Activated B cell treated with CpG ODN at 0.5 μM for 24 hours (primary cell): ENCODE measurements at regions of chr1 and their contacts with region 1.

Region 1: GRCh38 chr1:154272217-154272998 is at the start of gene HAX1:
- DNase-seq: peak; percentile 88
- ATAC-seq: peak; percentile 93
- H3K4me3 Mint-ChIP-seq: peak within 1 kb of the TSS; percentile 96
- H3K27ac Mint-ChIP-seq: peak within 1 kb of the TSS; percentile 97
- H3K4me1 Mint-ChIP-seq: peaks cover 39% of the 10 kb centered on the region
- H3K27me3 Mint-ChIP-seq: no peaks in the 10 kb centered on the region
- CTCF ChIP-seq: peak; percentile 46
- total RNA-seq, gene HAX1: 89.4 and 93.0 TPM in 2 replicates

Region 2: GRCh38 chr1:153572569-153573015 is 699.8 kb before region 1 on chr1:
- CTCF ChIA-PET with region 1: no interaction called
- POLR2A ChIA-PET with region 1: no interaction called
- intact Hi-C with region 1: loop called (anchors 2 kb)
- DNase-seq: peak; percentile 53
- ATAC-seq: peak; percentile 93
- H3K4me3 Mint-ChIP-seq: no peak overlapping the region
- H3K27ac Mint-ChIP-seq: peak overlapping the region; percentile 79
- H3K4me1 Mint-ChIP-seq: peaks cover 27% of the 10 kb centered on the region
- H3K27me3 Mint-ChIP-seq: peaks cover 8% of the 10 kb centered on the region
- CTCF ChIP-seq: no peak

Region 3: GRCh38 chr1:153796791-153797659 is 475.4 kb before region 1 on chr1:
- CTCF ChIA-PET with region 1: interaction called, 3 read pairs
- POLR2A ChIA-PET with region 1: no interaction called
- intact Hi-C with region 1: loop called (anchors 1 kb)
- DNase-seq: peak; percentile 59
- ATAC-seq: peak; percentile 97
- H3K4me3 Mint-ChIP-seq: no peak overlapping the region
- H3K27ac Mint-ChIP-seq: peak overlapping the region; percentile 1
- H3K4me1 Mint-ChIP-seq: peaks cover 16% of the 10 kb centered on the region
- H3K27me3 Mint-ChIP-seq: no peaks in the 10 kb centered on the region
- CTCF ChIP-seq: peak; percentile 89

Region 4: DNA sequence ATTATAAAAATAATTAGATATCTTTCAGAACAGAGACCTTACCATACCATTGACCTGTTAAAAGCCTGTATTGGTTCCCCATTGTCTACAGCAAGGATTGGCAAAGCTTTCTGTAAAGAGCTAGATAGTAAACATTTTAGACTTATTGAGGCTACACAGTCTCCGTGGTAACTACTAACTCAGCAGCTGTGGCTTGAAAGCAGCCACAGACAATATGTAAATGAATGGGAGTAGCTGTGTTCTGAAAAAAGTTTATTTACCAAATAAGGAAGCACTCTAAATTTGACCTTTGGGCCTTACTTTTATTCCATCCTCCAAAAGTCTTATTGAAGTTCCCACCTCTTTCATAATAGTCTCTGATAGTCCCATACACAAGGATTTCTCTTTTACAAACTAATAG is 157.2 kb before region 1 on chr1:
- CTCF ChIA-PET with region 1: no interaction called
- POLR2A ChIA-PET with region 1: no interaction called
- intact Hi-C with region 1: no loop called
- DNase-seq: no peak
- ATAC-seq: no peak
- H3K4me3 Mint-ChIP-seq: no peak overlapping the region
- H3K27ac Mint-ChIP-seq: no peak overlapping the region
- H3K4me1 Mint-ChIP-seq: peaks cover 4% of the 10 kb centered on the region
- H3K27me3 Mint-ChIP-seq: no peaks in the 10 kb centered on the region
- CTCF ChIP-seq: no peak

Region 5: DNA sequence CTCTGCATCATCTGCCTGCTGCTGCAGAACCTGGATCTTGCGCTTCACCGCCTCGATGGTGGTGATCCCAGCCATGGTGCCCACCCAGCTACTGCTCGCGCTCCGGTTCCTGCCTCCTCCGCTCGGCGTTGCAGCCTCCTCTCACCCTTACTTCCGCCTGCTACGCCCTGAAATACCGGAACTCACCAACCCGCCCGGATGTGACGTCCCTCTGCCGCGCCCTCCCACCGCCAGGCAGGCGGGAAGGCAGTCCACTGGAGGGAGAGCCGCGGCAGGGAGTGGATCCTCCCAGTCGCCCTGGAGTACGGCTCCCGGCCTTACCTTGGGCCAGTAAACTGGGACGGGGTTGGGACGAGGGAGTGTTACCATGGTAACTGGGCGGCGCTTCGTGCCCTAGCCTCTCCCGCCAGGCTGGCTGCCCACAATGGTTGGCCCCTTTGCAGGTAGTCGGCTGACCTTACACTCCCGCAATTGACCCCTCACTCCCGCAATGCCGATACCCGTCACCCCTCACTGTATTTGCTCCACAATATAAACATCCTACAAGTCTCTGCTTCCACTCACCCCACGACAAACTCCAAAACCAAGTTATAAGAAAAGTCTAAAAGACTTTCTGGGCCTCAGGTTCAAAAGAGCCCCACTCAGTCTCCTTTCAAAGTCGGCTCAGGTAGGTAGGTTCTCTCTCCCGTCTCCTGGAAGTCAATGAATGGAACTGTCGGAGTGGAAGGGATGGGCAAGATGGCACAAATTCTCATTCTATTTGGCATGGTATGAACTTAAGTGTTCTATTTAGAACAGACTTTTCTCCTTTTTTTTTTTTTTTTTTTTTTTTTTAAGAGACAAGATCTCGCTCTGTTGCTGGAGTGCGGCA is 89.1 kb before region 1 on chr1:
- CTCF ChIA-PET with region 1: interaction called, 7 read pairs
- POLR2A ChIA-PET with region 1: interaction called, 7 read pairs
- intact Hi-C with region 1: loop called (anchors 1 kb)
- DNase-seq: peak; percentile 93
- ATAC-seq: peak; percentile 76
- H3K4me3 Mint-ChIP-seq: peak overlapping the region; percentile 100
- H3K27ac Mint-ChIP-seq: peak overlapping the region; percentile 100
- H3K4me1 Mint-ChIP-seq: peaks cover 48% of the 10 kb centered on the region
- H3K27me3 Mint-ChIP-seq: peaks cover 2% of the 10 kb centered on the region
- CTCF ChIP-seq: no peak

Region 6: DNA sequence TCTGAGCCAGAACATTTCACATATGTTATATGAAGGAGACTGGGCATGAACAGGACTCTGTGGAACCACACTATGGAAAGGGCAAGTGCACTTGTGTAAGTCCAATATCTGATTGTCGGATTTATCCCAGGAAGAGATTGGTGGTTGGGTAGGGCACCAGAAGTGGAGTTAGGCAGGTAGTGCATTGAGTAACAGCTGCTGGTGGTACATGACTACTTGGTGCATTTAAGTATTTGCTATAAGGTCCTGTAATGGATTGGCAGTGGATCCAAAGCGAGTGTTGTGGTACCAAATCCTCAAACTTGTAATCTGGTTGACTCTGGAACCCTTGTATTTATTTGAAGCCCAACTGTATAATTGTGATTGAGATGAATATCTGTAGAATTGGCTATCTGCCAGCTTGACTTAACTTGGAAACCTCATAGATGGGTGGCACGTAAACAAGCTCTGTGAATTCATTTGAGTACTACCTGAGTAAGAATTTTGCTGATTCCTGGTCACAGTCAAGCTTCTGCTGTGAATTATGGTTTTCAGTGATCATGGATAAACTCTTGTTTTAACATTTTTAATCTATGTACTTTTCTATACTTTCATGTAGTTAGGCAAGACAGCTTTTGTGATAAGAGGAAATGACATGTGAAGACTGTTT is 30.6 kb before region 1 on chr1:
- CTCF ChIA-PET with region 1: no interaction called
- POLR2A ChIA-PET with region 1: no interaction called
- intact Hi-C with region 1: no loop called
- DNase-seq: no peak
- ATAC-seq: no peak
- H3K4me3 Mint-ChIP-seq: no peak overlapping the region
- H3K27ac Mint-ChIP-seq: no peak overlapping the region
- H3K4me1 Mint-ChIP-seq: peaks cover 3% of the 10 kb centered on the region
- H3K27me3 Mint-ChIP-seq: no peaks in the 10 kb centered on the region
- CTCF ChIP-seq: no peak

Region 7: DNA sequence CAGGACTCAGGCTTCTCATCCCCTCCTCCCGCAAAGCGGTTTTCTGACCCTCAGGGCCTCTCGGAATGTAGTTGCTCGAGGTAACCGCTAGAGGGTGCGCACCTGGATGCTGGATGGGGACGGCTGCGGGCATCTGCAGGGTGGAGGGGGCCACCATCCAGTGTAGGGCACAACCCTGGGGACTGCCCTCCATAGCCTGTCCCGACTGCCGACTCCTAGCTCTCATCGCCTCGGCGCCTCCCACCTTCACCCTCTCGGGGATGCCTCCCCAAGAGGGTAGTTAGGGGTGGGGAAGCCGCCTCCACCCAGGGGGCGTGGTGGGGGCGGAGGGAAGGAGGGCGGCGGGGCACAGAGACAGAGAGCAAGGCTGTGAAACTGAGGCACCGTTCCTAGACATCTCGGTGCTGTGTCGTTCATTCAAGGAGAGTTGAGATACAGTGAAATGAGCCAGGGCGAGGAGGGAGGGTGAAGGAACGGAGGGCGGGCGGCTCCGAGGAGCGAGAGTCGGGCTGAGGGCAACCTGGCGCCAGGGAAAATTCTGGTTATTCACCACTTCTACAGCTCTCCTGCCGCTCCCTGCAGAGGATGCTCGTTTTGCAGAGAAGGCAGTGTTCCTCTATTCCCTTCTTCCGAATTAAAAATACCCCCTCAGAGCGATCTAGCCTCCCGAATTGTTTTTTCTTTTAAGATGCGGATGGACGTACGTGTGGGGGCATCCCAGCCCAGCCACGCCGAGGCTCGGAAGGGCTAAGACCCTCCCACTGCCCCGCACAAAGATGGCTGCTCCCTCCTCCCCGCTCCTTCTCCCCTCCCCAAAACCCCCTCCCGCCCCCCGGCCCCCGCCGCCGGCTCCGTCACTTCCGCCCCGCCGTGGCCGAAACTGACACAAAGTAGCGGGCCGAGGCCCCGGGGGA is 52.5 kb after region 1 on chr1 and contains the start of gene ATP8B2:
- CTCF ChIA-PET with region 1: interaction called, 4 read pairs
- POLR2A ChIA-PET with region 1: interaction called, 5 read pairs
- intact Hi-C with region 1: loop called (anchors 1 kb)
- DNase-seq: peak; percentile 74
- ATAC-seq: peak; percentile 67
- H3K4me3 Mint-ChIP-seq: peak within 1 kb of the TSS; percentile 95
- H3K27ac Mint-ChIP-seq: peak within 1 kb of the TSS; percentile 88
- H3K4me1 Mint-ChIP-seq: peaks cover 41% of the 10 kb centered on the region
- H3K27me3 Mint-ChIP-seq: peaks cover 17% of the 10 kb centered on the region
- CTCF ChIP-seq: peak; percentile 71
- total RNA-seq, gene ATP8B2: 24.3 and 27.3 TPM in 2 replicates